Left cardiac atrium (tissue), 4 donors: ENCODE measurements at regions of chr11 and their contacts with region 1.

Region 1: GRCh38 chr11:615504-616319 is at the start of gene IRF7:
- DNase-seq: peak; percentile 98
- ATAC-seq: peak; percentile 88 to 91
- total RNA-seq, gene IRF7: 12.1 to 24.3 TPM

Region 2: GRCh38 chr11:554824-555472 is 60.8 kb before region 1 on chr11:
- intact Hi-C with region 1: loop called in 1 of 2 experiments (anchors 10 kb)
- DNase-seq: peak; percentile 69
- ATAC-seq: peak; percentile 74 to 75

Region 3: GRCh38 chr11:575996-576768 is 39.5 kb before region 1 on chr11 and contains the start of gene PHRF1:
- intact Hi-C with region 1: loop called in 1 of 2 experiments (anchors 5 kb)
- DNase-seq: peak; percentile 97
- ATAC-seq: peak; percentile 92 to 95
- total RNA-seq, gene PHRF1: 17.3 to 21.5 TPM

Region 4: DNA sequence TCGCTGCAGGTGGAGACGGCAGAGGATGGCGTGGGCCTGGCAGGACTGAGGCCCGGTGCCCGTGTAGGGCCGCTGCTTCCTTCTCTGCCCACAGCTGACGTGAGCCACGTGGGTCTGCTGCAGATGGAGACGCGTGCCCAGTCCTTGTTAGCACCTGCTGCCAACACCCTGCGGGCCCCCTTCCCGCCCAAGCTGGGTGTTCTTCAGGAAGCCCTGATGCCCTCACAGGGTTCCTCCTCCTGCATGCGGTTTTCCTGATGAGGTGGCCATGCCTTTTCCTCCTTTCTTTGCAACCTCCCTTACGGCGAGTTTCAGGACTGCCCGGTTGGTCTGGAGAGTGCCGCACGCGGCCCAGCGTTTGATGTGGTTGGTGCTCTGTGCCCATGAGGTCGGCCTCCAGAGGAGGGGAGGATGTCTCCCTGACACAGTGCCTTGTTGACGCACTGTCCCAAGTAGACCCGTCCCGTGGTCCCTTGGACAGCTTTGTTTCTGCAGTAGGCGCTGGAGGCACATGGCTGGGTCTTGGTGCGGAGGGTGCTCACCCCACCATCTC is 354.7 kb after region 1 on chr11:
- intact Hi-C with region 1: no loop called
- DNase-seq: no peak
- ATAC-seq: no peak